Cardiac septum (tissue), 1 donor: ENCODE measurements at regions of chr9 and their contacts with region 1.

Region 1: GRCh38 chr9:32426278-32426939 is 42.0 kb downstream of the ACO1 start:
- DNase-seq: no peak

Region 2: DNA sequence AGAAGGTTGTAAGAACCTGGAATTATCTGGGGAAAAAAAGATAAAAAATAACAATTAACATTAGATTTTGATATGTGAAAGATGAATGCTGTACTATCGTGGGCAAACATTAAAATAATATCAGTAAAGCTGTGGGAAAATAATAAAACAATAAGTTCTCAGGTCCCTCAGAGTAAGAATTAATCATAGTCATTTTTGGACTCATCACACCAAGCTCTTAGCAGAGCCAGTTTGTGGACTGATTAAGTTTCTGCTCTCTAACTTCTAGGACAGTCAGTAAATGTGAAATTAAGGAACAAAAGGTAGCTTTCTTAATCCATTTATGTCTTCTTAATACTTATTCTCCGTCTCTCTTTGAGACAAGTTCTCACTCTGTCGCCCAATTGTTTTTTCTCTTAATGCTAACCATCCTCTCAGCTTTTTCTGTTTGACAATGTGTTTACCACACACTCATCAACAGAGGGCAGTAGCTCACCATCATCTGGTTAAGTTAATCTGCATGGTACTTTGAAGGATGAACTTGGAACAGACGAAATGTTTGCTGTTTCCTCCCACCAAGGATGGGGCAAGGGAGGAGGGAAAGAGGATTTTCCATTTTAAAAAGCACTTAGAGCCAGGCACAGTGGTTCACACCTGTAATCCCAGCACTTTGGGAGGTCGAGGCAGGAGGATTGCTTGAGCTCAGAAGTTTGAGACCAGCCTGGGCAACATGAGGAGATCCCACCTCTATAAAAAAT is 47.2 kb before region 1 on chr9:
- intact Hi-C with region 1: loop called (anchors 10 kb)
- DNase-seq: no peak

Region 3: DNA sequence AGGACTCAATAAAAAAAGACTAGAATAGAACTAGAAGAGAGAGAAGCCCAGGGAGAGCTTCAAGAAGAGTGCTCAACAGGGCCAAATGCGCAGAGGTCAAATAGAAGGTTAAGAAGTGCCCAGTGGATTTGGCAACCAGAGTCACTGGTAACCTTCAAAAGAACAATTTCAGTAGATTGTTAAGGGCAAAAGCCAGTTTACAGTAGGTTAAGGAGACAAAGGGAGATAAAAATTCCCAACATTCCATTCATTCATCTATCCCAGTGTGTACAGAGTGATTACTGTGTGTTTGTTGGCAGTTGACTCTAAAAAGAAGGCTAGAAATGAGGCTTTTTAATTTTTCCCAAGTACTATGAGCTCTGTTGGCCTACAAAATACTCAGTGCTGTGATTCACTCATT is 30.2 kb after region 1 on chr9:
- intact Hi-C with region 1: loop called (anchors 5 kb)
- DNase-seq: no peak

Region 4: DNA sequence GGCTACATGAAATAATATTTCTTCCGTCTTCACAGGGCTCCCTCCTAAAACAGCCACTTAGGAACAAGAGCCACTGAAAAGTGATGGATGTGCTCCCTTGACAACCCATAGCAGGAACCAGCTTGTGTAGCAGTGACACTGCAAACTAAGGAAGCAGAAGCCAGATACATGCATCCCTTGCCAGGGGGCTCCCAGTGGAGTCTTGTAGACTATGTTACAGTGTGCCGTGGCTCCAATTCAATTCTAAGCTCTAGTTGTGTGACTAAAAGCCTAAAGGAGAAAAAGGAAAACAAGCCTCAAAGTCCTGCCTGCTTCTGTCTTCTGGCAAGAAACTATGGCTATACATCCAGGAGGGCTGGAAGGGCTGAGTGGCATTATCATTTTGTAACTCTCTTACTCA is 221.3 kb after region 1 on chr9:
- intact Hi-C with region 1: no loop called
- DNase-seq: no peak